Right ventricle myocardium inferior (tissue), 1 donor: ENCODE measurements at regions of chr7 and their contacts with region 1.

Region 1: GRCh38 chr7:129952653-129953560 is at the start of gene UBE2H:
- DNase-seq: peak; percentile 97
- ATAC-seq: peak; percentile 90
- total RNA-seq, gene UBE2H: 103 TPM

Region 2: DNA sequence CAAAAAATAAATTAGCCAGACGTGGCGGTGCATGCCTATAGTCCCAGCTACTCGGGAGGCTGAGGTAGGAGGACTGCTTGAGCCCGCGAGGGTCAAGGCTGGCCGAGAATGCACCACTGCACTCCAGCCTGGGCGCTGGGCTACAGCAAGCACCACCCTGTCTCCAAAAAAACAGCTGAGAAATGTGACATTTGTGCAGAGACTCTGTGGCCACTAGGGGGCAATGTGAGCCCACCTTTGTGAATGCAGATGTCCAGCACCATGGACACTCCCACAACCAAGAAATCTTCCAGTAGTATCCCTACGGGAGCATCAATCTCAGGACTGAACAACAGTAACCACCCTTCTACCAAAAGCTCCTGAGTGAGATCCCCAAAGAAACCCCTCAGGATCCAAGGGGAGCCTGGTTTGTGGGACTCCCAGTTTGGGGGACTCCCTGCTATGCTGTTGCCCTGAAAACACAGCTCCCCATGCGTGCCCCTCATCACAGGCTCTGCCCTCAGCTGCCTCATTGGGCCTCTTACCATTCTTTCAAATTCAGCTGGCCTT is 734.3 kb before region 1 on chr7:
- intact Hi-C with region 1: no loop called
- DNase-seq: peak; percentile 88
- ATAC-seq: peak; percentile 90

Region 3: DNA sequence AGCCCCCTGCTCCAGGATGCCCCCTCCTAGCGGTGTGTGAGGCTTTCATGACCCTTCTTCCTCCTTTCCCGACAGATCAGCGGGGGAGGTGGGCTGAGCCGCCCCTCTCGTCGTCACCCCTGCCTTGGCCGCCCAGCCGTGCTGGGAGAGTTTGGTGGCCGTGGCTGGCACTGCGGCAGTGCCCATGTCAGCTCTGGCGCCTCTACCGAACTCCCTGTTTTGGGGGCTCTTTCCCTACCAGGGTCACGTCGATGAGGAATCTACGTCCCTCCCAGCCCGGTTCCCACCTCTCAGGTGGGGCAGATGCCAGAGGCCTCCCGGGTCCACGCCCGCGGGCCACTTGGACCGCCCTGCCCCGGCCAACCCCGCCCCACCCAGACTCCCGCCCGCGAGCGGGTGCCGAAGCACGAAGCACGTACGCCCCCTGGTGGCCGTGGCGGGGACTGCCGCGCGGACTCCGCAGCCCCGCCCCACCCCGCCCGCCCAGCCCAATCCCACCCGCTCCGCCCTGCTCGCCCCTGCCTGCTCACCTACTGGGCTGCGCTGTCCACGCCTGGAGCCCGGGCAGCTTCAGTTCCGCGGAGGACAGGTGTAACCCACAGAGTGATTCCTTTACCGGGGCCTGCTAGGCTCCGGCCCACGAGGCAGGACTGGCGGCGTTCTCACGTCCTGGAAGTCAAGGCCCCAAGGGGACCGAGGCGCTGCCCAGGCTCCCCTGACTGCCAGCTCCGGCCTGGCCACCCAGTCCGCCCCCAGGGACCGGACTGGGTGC is 127.2 kb before region 1 on chr7:
- intact Hi-C with region 1: loop called (anchors 2 kb)
- DNase-seq: peak; percentile 96
- ATAC-seq: peak; percentile 89

Region 4: DNA sequence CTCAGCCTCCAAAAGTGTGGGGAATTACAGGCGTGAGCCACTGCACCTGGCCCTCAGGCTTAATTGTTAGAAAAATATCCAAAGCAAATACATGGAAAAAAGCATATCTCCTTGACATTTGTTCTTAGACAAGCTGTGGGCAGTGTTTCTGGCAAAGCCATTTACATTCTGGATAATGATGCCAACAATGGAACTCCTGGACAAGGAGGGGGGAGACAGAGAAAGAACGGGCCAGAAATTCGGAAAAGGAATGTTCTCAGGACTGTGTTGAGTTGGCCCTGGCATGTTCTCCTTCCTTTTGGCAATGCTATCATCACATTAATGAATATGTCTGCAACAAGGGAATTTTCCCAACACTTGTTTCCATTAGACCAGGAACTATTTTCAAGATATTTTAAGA is 88.9 kb before region 1 on chr7:
- intact Hi-C with region 1: loop called (anchors 5 kb)
- DNase-seq: no peak
- ATAC-seq: peak; percentile 83

Region 5: DNA sequence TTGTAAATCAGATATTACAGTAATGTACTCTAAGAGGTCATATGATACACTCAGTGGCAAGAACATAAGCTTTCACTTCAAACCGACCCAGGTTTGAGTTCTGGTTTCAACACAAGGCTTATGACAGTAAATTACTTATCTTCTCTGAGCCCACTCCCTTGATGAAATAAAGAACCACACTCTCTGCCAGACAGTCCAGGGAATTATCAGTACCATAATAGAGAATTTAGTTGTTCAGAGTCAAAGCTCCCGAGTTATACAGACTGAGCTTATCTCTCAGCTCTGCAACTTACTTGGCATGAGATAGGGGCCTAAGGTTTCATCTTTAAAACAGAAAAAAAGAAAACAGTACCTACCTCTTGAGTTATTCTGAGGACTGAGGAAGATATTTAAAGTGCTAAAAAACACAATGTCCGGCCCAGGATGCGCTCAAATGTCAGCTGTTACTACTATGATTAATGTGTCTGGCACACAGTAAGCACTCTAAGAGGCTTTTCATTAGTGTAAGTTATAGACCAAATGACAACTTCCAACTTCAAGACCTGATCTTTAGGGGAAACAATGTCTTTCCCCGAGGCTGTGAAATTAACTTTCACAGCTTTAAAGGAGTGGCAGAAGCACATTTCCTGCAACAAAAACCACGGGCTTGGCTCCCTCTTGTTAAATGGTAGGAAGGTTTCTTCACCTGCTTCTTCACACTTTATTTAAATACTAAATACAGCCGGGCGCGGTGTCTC is 38.2 kb before region 1 on chr7:
- intact Hi-C with region 1: loop called (anchors 5 kb)
- DNase-seq: no peak
- ATAC-seq: peak; percentile 18